ENCODE measurements at regions of chr6 and their contacts with region 1.

Region 1: DNA sequence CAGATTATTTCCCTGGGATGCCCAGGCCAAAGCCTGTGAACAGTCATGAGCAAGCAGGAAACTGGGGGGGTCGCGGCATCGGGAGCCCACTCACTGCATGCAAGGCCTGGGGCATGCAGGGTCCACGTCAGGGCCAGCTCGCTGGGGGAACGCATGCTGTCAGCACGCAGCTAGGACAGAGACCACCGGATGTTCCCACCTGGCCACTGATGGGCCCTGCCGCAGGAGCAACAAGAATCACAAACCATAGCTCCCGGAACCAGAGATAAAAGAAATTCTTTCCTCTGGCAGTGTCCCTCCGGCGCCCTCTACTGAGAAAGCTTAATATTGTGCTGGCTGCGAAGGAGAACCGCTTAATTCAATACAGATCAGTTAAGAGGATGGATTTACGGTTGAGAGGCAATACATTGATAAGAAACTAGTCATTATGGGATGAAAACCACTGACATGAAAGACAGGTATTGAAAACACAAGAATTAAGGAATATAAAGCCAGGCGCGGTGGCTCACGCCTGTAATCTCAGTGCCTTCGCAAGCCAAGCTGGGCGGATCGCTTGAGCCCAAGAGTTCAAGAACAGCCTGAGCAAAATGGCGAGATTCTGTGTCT is 32.6 kb downstream of the C6orf15 start:
- DNase-seq: peak; percentile 50 to 81 (median 70)
- ATAC-seq: peak; percentile 88
- H3K4me3 ChIP-seq: peak overlapping the region; percentile 26 to 48
- H3K4me3 Mint-ChIP-seq: peak overlapping the region; percentile 74
- H3K27ac ChIP-seq: no peak overlapping the region
- H3K27ac Mint-ChIP-seq: no peak overlapping the region
- H3K4me1 ChIP-seq: peaks cover 10% of the 10 kb centered on the region
- H3K4me1 Mint-ChIP-seq: peaks cover 9% of the 10 kb centered on the region
- H3K27me3 ChIP-seq: no peaks in the 10 kb centered on the region
- H3K27me3 Mint-ChIP-seq: peaks cover 2% of the 10 kb centered on the region
- CTCF ChIP-seq: peak; percentile 83

Region 2: DNA sequence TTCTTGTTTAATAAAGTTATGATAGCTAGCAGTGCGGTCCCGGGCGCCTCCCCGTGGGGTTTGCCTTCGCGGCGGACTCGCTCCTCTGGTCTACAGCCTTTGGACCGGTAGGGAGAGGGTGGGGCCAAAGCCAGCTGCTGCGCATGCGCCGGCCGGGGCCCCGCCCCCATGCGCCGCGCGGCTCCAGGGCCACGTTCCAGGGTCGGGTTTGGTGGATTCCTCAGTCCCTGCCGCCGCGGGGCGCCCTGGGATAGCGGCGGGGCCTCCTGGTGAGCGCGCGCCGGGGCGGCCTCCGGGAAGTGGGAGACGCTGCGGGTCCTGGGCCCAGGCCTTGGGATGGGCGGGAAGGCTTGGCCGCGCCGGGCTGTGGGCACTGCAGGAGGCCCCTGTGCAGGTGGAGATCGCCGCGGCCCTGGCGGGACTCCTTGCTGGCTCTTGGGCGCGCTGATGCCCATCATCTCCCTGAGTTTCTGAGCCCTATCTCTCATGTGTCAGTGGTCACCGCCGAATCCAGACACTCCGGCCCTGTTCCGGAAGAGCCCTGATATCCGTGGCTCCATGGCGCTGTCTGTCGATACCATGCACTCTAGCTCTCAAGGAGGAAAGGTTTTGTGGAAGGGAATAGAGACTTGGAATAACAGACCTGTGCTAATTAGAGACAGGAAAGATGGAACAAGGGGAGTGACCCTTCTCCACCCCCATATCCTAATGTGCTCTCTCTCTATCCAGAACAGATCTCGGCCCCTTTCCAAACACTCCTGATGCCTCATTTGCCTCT is 165.5 kb before region 1 on chr6 and contains the start of gene VARS2:
- CTCF ChIA-PET with region 1: interaction called, 13 read pairs
- POLR2A ChIA-PET with region 1: interaction called, 3 read pairs
- intact Hi-C with region 1: no loop called
- DNase-seq: peak; percentile 66 to 92 (median 82)
- ATAC-seq: peak; percentile 96
- H3K4me3 ChIP-seq: peak within 1 kb of the TSS; percentile 61 to 92
- H3K4me3 Mint-ChIP-seq: peak within 1 kb of the TSS; percentile 93
- H3K27ac ChIP-seq: peak within 1 kb of the TSS; percentile 48 to 65
- H3K27ac Mint-ChIP-seq: peak within 1 kb of the TSS; percentile 88
- H3K4me1 ChIP-seq: peaks cover 15% of the 10 kb centered on the region
- H3K4me1 Mint-ChIP-seq: peaks cover 29% of the 10 kb centered on the region
- H3K27me3 ChIP-seq: no peaks in the 10 kb centered on the region
- H3K27me3 Mint-ChIP-seq: no peaks in the 10 kb centered on the region
- CTCF ChIP-seq: no peak
- total RNA-seq, gene VARS2: 19.5 to 20.6 TPM

Region 3: DNA sequence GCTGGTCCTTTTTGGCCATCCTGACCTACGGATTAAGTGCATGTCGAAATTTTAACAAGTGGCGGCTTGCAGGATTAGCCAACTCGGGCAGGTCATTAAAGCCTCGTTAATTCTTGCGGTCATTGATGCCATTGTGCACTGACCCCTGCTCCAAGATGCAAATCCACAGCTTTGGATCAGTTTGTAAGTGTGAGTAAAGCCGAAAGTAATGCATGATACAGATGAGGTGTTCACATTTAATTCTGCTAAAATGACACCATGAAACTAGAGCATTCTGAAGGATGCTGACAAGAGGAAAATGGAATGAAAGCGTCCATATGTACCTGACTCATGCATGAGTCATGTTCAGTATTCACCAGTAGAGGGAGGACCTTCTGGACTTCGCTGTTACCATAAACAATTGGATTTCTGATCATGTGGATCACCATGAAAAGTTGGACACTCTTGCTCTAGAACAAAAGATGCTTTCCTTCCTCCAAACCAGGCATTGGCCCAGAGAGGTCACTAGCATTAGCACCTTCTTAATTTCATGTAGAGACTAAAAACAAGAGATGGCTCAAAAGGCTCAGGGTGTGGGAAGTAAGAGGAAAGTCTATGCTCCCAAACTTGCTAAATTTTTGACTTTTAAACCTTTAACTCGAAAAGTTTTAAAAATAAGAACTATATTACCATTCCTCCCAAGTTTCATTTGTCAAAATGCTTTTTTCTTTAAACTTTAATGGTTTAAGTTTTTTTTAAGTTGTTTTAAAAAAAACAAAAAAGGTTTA is 21.4 kb before region 1 on chr6:
- CTCF ChIA-PET with region 1: interaction called, 20 read pairs
- POLR2A ChIA-PET with region 1: no interaction called
- intact Hi-C with region 1: no loop called
- DNase-seq: peak in 2 of 9 experiments; percentile 24 to 43
- ATAC-seq: no peak
- H3K4me3 ChIP-seq: no peak overlapping the region
- H3K4me3 Mint-ChIP-seq: no peak overlapping the region
- H3K27ac ChIP-seq: no peak overlapping the region
- H3K27ac Mint-ChIP-seq: no peak overlapping the region
- H3K4me1 ChIP-seq: no peaks in the 10 kb centered on the region
- H3K4me1 Mint-ChIP-seq: no peaks in the 10 kb centered on the region
- H3K27me3 ChIP-seq: no peaks in the 10 kb centered on the region
- H3K27me3 Mint-ChIP-seq: peaks cover 8% of the 10 kb centered on the region
- CTCF ChIP-seq: peak; percentile 19

Region 4: GRCh38 chr6:31068669-31069340 is 11.0 kb before region 1 on chr6:
- CTCF ChIA-PET with region 1: interaction called, 21 read pairs
- POLR2A ChIA-PET with region 1: no interaction called
- intact Hi-C with region 1: no loop called
- DNase-seq: peak; percentile 37 to 82 (median 67)
- ATAC-seq: peak; percentile 75
- H3K4me3 ChIP-seq: no peak overlapping the region
- H3K4me3 Mint-ChIP-seq: no peak overlapping the region
- H3K27ac ChIP-seq: no peak overlapping the region
- H3K27ac Mint-ChIP-seq: no peak overlapping the region
- H3K4me1 ChIP-seq: no peaks in the 10 kb centered on the region
- H3K4me1 Mint-ChIP-seq: no peaks in the 10 kb centered on the region
- H3K27me3 ChIP-seq: no peaks in the 10 kb centered on the region
- H3K27me3 Mint-ChIP-seq: peaks cover 2% of the 10 kb centered on the region
- CTCF ChIP-seq: peak; percentile 76

Region 5: GRCh38 chr6:31094389-31094881 is 14.7 kb after region 1 on chr6:
- CTCF ChIA-PET with region 1: interaction called, 31 read pairs
- POLR2A ChIA-PET with region 1: interaction called, 4 read pairs
- intact Hi-C with region 1: no loop called
- DNase-seq: peak in 8 of 9 experiments; percentile 40 to 82 (median 56)
- ATAC-seq: peak; percentile 85
- H3K4me3 ChIP-seq: peak overlapping the region; percentile 5 to 34
- H3K4me3 Mint-ChIP-seq: peak overlapping the region; percentile 72
- H3K27ac ChIP-seq: peak overlapping the region; percentile 49 to 64
- H3K27ac Mint-ChIP-seq: peak overlapping the region; percentile 98
- H3K4me1 ChIP-seq: peaks cover 42% of the 10 kb centered on the region
- H3K4me1 Mint-ChIP-seq: peaks cover 46% of the 10 kb centered on the region
- H3K27me3 ChIP-seq: no peaks in the 10 kb centered on the region
- H3K27me3 Mint-ChIP-seq: no peaks in the 10 kb centered on the region
- CTCF ChIP-seq: no peak

Region 6: DNA sequence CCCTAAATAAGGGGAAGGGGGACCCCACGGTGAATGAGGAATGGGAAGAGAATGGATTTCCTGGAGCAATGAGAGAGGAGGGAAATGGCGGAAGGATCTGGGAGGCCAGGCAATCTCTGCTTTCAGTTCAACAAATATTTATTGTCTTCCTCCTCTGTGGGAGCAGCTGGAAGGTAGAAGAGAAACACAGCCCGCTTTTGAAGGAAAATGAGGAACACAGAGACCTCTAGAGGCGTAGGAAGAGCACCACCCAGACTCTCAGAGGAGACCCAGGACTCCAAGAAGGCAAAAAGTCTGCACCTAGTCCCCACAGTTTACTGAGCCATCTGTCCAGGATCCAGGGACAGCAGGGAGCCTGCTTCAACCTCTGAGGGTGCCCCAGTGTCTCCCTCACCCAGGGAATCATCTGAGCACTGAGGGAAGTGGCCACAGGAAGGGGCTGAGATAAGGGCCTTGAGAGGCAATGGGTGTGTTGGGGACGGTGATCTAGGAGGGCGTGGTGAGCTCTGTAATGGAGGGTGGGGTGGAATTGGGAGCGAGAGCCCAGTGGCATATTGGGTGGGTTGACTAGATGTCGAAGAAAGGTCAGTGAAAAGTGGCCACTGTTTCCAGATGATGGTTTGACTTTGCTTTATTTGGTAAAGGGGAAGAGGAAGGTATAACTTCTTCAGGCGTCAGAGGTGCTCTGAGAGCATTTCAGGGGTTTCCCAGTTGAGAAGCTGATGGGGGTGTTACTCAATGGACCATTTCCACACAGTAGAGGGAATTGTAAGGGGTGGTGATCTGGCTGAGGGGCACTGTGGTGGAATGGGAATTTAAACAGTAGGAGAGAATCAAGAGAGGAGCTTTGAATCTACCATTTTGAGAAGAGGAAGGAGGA is 35.5 kb after region 1 on chr6:
- CTCF ChIA-PET with region 1: interaction called, 31 read pairs
- POLR2A ChIA-PET with region 1: no interaction called
- intact Hi-C with region 1: no loop called
- DNase-seq: peak in 1 of 9 experiments; percentile 46
- ATAC-seq: peak; percentile 29
- H3K4me3 ChIP-seq: no peak overlapping the region
- H3K4me3 Mint-ChIP-seq: no peak overlapping the region
- H3K27ac ChIP-seq: no peak overlapping the region
- H3K27ac Mint-ChIP-seq: no peak overlapping the region
- H3K4me1 ChIP-seq: no peaks in the 10 kb centered on the region
- H3K4me1 Mint-ChIP-seq: peaks cover 3% of the 10 kb centered on the region
- H3K27me3 ChIP-seq: no peaks in the 10 kb centered on the region
- H3K27me3 Mint-ChIP-seq: peaks cover 11% of the 10 kb centered on the region
- CTCF ChIP-seq: no peak

Region 7: DNA sequence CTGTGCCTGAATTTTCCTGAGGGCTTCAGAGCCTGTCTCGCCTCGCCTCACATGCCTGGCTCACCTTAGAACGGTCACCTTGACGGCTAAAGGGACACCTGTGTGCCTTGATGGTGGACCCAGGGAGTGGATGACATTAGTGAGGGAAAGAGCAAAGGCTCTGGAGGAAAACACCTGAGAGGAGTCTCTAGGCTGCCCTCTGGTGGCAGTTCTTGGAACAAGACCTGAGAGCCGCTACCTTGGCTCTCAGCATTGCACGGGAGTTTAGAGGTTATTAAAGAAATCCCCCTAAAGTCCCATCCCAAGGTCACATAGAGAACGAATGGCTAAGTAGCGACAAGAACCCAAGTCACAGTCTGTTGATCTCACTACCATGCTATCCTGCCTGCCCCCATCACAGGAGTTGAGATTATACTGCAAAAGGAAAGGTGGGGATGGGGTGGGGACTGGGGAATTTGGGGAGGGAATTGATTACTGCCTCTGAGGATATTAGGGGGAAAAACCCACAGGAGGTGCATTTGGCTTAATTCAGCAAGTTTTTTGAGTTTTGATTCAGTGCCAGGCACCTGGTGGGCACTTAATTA is 48.4 kb after region 1 on chr6:
- CTCF ChIA-PET with region 1: interaction called, 19 read pairs
- POLR2A ChIA-PET with region 1: no interaction called
- intact Hi-C with region 1: no loop called
- DNase-seq: peak; percentile 50 to 87 (median 74)
- ATAC-seq: peak; percentile 90
- H3K4me3 ChIP-seq: no peak overlapping the region
- H3K4me3 Mint-ChIP-seq: no peak overlapping the region
- H3K27ac ChIP-seq: no peak overlapping the region
- H3K27ac Mint-ChIP-seq: no peak overlapping the region
- H3K4me1 ChIP-seq: no peaks in the 10 kb centered on the region
- H3K4me1 Mint-ChIP-seq: peaks cover 8% of the 10 kb centered on the region
- H3K27me3 ChIP-seq: no peaks in the 10 kb centered on the region
- H3K27me3 Mint-ChIP-seq: peaks cover 6% of the 10 kb centered on the region
- CTCF ChIP-seq: peak; percentile 79